CD8-positive, alpha-beta T cell (primary cell): ENCODE measurements at regions of chr9 and their contacts with region 1.

Region 1: GRCh38 chr9:128927731-128928411 is 7.1 kb downstream of the PHYHD1 start:
- DNase-seq: peak; percentile 21 to 77 (median 60)
- ATAC-seq: peak; percentile 74
- H3K4me3 ChIP-seq: no peak overlapping the region
- H3K4me3 Mint-ChIP-seq: no peak overlapping the region
- H3K27ac ChIP-seq: no peak overlapping the region
- H3K27ac Mint-ChIP-seq: no peak overlapping the region
- H3K4me1 ChIP-seq: peaks cover 5% of the 10 kb centered on the region
- H3K4me1 Mint-ChIP-seq: peaks cover 8% of the 10 kb centered on the region
- H3K27me3 ChIP-seq: no peaks in the 10 kb centered on the region
- H3K27me3 Mint-ChIP-seq: no peaks in the 10 kb centered on the region
- CTCF ChIP-seq: peak; percentile 97

Region 2: GRCh38 chr9:128568470-128569078 is 359.3 kb before region 1 on chr9:
- CTCF ChIA-PET with region 1: no interaction called
- POLR2A ChIA-PET with region 1: no interaction called
- intact Hi-C with region 1: no loop called
- DNase-seq: no peak
- ATAC-seq: no peak
- H3K4me3 ChIP-seq: no peak overlapping the region
- H3K4me3 Mint-ChIP-seq: no peak overlapping the region
- H3K27ac ChIP-seq: no peak overlapping the region
- H3K27ac Mint-ChIP-seq: no peak overlapping the region
- H3K4me1 ChIP-seq: no peaks in the 10 kb centered on the region
- H3K4me1 Mint-ChIP-seq: peaks cover 32% of the 10 kb centered on the region
- H3K27me3 ChIP-seq: no peaks in the 10 kb centered on the region
- H3K27me3 Mint-ChIP-seq: no peaks in the 10 kb centered on the region
- CTCF ChIP-seq: no peak

Region 3: DNA sequence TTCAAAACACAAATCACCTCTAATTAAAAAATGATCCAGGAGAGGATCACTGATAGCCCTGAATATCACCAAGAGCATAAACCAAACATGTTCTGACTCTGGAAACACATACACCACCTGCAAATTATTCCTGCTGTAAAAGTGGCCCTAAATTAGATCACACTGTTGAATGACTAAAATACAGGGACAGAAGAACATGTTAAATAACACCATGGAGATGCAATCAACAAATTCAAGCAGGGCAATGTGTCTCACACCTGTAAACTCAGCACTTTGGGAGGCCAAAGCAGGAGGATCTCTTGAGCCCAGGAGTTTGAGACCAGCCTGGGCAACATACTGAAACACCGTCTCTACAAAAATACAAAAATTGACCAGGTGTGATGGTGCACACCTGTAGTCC is 80.1 kb before region 1 on chr9:
- CTCF ChIA-PET with region 1: interaction called, 17 read pairs
- POLR2A ChIA-PET with region 1: no interaction called
- intact Hi-C with region 1: no loop called
- DNase-seq: no peak
- ATAC-seq: no peak
- H3K4me3 ChIP-seq: no peak overlapping the region
- H3K4me3 Mint-ChIP-seq: no peak overlapping the region
- H3K27ac ChIP-seq: no peak overlapping the region
- H3K27ac Mint-ChIP-seq: no peak overlapping the region
- H3K4me1 ChIP-seq: no peaks in the 10 kb centered on the region
- H3K4me1 Mint-ChIP-seq: peaks cover 2% of the 10 kb centered on the region
- H3K27me3 ChIP-seq: no peaks in the 10 kb centered on the region
- H3K27me3 Mint-ChIP-seq: no peaks in the 10 kb centered on the region
- CTCF ChIP-seq: no peak

Region 4: GRCh38 chr9:128870128-128870952 is 57.5 kb before region 1 on chr9:
- CTCF ChIA-PET with region 1: interaction called, 299 read pairs
- POLR2A ChIA-PET with region 1: no interaction called
- intact Hi-C with region 1: no loop called
- DNase-seq: no peak
- ATAC-seq: no peak
- H3K4me3 ChIP-seq: no peak overlapping the region
- H3K4me3 Mint-ChIP-seq: no peak overlapping the region
- H3K27ac ChIP-seq: no peak overlapping the region
- H3K27ac Mint-ChIP-seq: no peak overlapping the region
- H3K4me1 ChIP-seq: no peaks in the 10 kb centered on the region
- H3K4me1 Mint-ChIP-seq: peaks cover 6% of the 10 kb centered on the region
- H3K27me3 ChIP-seq: no peaks in the 10 kb centered on the region
- H3K27me3 Mint-ChIP-seq: no peaks in the 10 kb centered on the region
- CTCF ChIP-seq: no peak

Region 5: GRCh38 chr9:128902351-128903078 is 25.4 kb before region 1 on chr9:
- CTCF ChIA-PET with region 1: interaction called, 34 read pairs
- POLR2A ChIA-PET with region 1: no interaction called
- intact Hi-C with region 1: no loop called
- DNase-seq: peak; percentile 71 to 95 (median 90)
- ATAC-seq: peak; percentile 93
- H3K4me3 ChIP-seq: peak overlapping the region; percentile 32 to 56
- H3K4me3 Mint-ChIP-seq: peak overlapping the region; percentile 81
- H3K27ac ChIP-seq: peak overlapping the region; percentile 87 to 92
- H3K27ac Mint-ChIP-seq: peak overlapping the region; percentile 91
- H3K4me1 ChIP-seq: peaks cover 69% of the 10 kb centered on the region
- H3K4me1 Mint-ChIP-seq: peaks cover 69% of the 10 kb centered on the region
- H3K27me3 ChIP-seq: no peaks in the 10 kb centered on the region
- H3K27me3 Mint-ChIP-seq: no peaks in the 10 kb centered on the region
- CTCF ChIP-seq: no peak

Region 6: DNA sequence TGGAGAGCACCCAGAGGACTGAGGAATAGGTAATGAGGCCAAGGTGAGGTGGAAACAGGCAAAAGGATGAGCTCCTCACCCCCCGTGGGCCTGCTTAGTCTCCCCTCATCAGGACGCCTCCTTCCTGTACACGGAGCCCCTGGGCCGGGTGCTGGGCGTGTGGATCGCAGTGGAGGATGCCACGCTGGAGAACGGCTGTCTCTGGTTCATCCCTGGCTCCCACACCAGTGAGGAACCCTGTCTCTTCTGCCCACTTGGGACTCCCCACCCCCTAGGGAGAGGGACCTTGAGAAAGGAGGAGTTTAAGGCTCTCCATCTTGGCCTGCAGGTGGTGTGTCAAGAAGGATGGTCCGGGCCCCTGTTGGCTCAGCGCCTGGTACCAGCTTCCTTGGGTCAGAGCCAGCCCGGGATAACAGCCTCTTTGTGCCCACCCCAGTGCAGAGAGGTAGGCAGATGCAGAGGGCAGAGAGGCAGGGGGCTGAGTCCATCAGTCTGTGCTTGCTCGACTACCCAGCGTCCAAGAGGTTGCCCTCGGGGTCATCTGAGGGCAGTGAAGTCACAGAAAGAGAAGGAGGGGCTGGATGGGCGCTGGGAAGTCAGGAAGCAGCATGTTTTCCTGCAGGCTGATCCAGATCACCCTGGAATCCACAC is 12.5 kb after region 1 on chr9:
- CTCF ChIA-PET with region 1: interaction called, 36 read pairs
- POLR2A ChIA-PET with region 1: no interaction called
- intact Hi-C with region 1: no loop called
- DNase-seq: no peak
- ATAC-seq: no peak
- H3K4me3 ChIP-seq: no peak overlapping the region
- H3K4me3 Mint-ChIP-seq: no peak overlapping the region
- H3K27ac ChIP-seq: no peak overlapping the region
- H3K27ac Mint-ChIP-seq: no peak overlapping the region
- H3K4me1 ChIP-seq: peaks cover under 1% of the 10 kb centered on the region
- H3K4me1 Mint-ChIP-seq: peaks cover 2% of the 10 kb centered on the region
- H3K27me3 ChIP-seq: no peaks in the 10 kb centered on the region
- H3K27me3 Mint-ChIP-seq: no peaks in the 10 kb centered on the region
- CTCF ChIP-seq: no peak